ENCODE measurements at regions of chr17 and their contacts with region 1.

Region 1: GRCh38 chr17:54096216-54096615 is 273.5 kb downstream of the KIF2B start:
- DNase-seq: no peak
- H3K4me3 ChIP-seq: no peak overlapping the region
- H3K4me3 Mint-ChIP-seq: no peak overlapping the region
- H3K27ac ChIP-seq: no peak overlapping the region
- H3K27ac Mint-ChIP-seq: no peak overlapping the region
- H3K4me1 ChIP-seq: no peaks in the 10 kb centered on the region
- H3K4me1 Mint-ChIP-seq: no peaks in the 10 kb centered on the region
- H3K27me3 ChIP-seq: no peaks in the 10 kb centered on the region
- H3K27me3 Mint-ChIP-seq: no peaks in the 10 kb centered on the region

Region 2: DNA sequence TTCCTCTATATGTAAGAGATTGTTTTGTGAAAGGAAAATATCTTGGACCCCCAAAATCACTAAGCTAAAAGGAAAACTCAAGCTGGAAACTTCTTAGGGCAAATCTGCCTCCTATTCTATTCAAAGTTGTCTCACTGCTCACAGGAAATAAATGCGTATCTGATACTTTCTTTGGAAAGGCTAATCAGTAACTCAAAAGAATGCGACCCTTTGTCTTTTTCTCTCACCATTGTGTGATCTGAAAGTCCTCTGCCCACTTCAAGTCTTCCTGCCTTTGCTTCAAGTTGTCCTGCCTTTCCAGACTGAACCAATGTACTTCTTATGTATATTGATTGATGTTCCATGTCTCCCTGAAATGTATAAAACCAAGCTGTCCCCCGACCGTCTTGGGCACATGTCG is 116.2 kb before region 1 on chr17:
- CTCF ChIA-PET with region 1: no interaction called
- POLR2A ChIA-PET with region 1: no interaction called
- intact Hi-C with region 1: no loop called
- DNase-seq: no peak
- H3K4me3 ChIP-seq: no peak overlapping the region
- H3K4me3 Mint-ChIP-seq: no peak overlapping the region
- H3K27ac ChIP-seq: no peak overlapping the region
- H3K27ac Mint-ChIP-seq: no peak overlapping the region
- H3K4me1 ChIP-seq: no peaks in the 10 kb centered on the region
- H3K4me1 Mint-ChIP-seq: no peaks in the 10 kb centered on the region
- H3K27me3 ChIP-seq: no peaks in the 10 kb centered on the region
- H3K27me3 Mint-ChIP-seq: no peaks in the 10 kb centered on the region

Region 3: GRCh38 chr17:54083855-54084254 is 12.4 kb before region 1 on chr17:
- CTCF ChIA-PET with region 1: no interaction called
- POLR2A ChIA-PET with region 1: no interaction called
- intact Hi-C with region 1: loop called (anchors 2 kb)
- DNase-seq: no peak
- H3K4me3 ChIP-seq: no peak overlapping the region
- H3K4me3 Mint-ChIP-seq: no peak overlapping the region
- H3K27ac ChIP-seq: no peak overlapping the region
- H3K27ac Mint-ChIP-seq: no peak overlapping the region
- H3K4me1 ChIP-seq: no peaks in the 10 kb centered on the region
- H3K4me1 Mint-ChIP-seq: no peaks in the 10 kb centered on the region
- H3K27me3 ChIP-seq: no peaks in the 10 kb centered on the region
- H3K27me3 Mint-ChIP-seq: no peaks in the 10 kb centered on the region

Measured in CD4-positive, alpha-beta memory T cell (primary cell).